ENCODE measurements at regions of chr14 and their contacts with region 1.

Region 1: GRCh38 chr14:61368114-61368726 is 46.8 kb downstream of the PRKCH start:
- DNase-seq: no peak
- H3K4me3 Mint-ChIP-seq: no peak overlapping the region
- H3K27ac Mint-ChIP-seq: peak overlapping the region; percentile 42
- H3K4me1 Mint-ChIP-seq: peaks cover 53% of the 10 kb centered on the region
- H3K27me3 Mint-ChIP-seq: no peaks in the 10 kb centered on the region

Region 2: GRCh38 chr14:61326847-61327246 is 41.4 kb before region 1 on chr14:
- CTCF ChIA-PET with region 1: interaction called, 3 read pairs
- POLR2A ChIA-PET with region 1: no interaction called
- intact Hi-C with region 1: loop called (anchors 1 kb)
- DNase-seq: no peak
- H3K4me3 Mint-ChIP-seq: peak overlapping the region; percentile 99
- H3K27ac Mint-ChIP-seq: peak overlapping the region; percentile 93
- H3K4me1 Mint-ChIP-seq: peaks cover 64% of the 10 kb centered on the region
- H3K27me3 Mint-ChIP-seq: no peaks in the 10 kb centered on the region

Region 3: DNA sequence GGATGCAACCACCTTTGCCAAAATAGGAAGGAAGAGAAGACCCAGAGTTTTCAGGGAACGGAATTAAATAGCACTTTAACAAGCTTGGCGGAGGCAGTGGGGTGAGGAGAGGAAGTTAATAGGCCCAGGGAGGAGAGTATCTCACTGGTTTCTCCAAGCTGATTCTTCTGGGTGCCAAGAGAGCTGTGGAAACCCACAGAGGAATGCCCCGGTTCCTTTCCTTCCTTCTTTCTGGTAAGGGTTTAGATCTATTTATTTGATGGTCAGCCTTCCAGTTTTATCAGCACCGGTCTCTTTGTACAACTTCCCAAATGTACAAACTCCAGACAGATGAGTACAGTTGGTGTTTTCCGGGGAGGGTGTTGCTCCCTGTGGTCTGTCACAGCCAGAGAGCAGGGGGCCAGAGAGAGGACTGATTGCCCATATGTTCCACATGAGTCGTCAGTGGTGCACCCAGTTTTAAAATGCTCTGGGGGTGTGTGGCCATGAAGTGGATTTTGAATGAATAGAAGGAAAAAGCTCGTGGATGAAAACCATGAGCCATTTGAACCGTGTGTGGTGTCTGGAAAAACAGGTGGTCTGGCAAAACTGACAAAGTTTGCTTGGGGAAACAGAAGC is 20.3 kb before region 1 on chr14:
- CTCF ChIA-PET with region 1: interaction called, 4 read pairs
- POLR2A ChIA-PET with region 1: interaction called, 4 read pairs
- intact Hi-C with region 1: loop called (anchors 1 kb)
- DNase-seq: peak; percentile 67
- H3K4me3 Mint-ChIP-seq: peak overlapping the region; percentile 82
- H3K27ac Mint-ChIP-seq: peak overlapping the region; percentile 98
- H3K4me1 Mint-ChIP-seq: peaks cover 98% of the 10 kb centered on the region
- H3K27me3 Mint-ChIP-seq: no peaks in the 10 kb centered on the region

Region 4: DNA sequence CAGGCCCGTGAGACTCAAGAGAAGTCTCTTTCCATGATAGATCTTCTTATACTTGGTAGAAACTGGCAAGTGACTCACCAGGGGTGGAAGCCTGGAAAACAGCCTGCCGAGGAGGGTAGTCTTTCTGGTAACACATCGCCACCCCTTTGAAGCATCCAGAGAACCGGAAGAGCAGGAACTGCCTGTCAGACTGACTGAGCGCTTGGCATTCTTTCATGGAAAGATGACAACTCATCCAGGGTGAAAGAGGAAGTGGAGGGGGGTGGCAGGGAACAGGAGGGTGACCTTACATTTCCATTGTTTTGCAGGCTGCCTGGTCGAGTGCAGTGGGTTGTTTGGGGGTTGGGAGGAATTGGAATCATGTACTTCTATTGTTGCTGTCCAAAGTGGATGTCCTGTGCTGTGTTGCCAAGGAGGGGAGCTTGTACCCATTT is 12.3 kb before region 1 on chr14:
- CTCF ChIA-PET with region 1: interaction called, 4 read pairs
- POLR2A ChIA-PET with region 1: interaction called, 4 read pairs
- intact Hi-C with region 1: loop called (anchors 1 kb)
- DNase-seq: peak; percentile 79
- H3K4me3 Mint-ChIP-seq: peak overlapping the region; percentile 63
- H3K27ac Mint-ChIP-seq: peak overlapping the region; percentile 87
- H3K4me1 Mint-ChIP-seq: peaks cover 89% of the 10 kb centered on the region
- H3K27me3 Mint-ChIP-seq: no peaks in the 10 kb centered on the region

Region 5: DNA sequence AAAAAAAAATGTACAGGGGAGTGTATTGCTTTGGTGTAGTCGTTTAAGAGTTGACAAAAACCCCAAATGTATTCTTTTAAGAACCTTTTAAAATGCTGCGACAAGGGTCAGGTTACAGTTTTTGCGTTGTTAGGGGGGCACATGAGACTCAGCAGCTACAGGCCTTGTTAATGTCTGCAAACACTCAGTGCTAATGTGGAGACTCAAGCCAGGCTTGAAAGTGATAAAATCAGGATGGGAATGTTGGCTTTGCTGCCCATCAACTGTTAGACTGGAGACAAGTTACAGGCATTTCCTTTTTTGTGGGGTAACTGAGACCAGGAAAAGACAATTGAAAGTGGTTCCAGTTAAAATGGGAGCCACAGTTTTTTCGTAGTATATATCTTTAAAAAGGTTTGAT is 38.0 kb after region 1 on chr14:
- CTCF ChIA-PET with region 1: no interaction called
- POLR2A ChIA-PET with region 1: no interaction called
- intact Hi-C with region 1: loop called (anchors 1 kb)
- DNase-seq: no peak
- H3K4me3 Mint-ChIP-seq: no peak overlapping the region
- H3K27ac Mint-ChIP-seq: peak overlapping the region; percentile 72
- H3K4me1 Mint-ChIP-seq: peaks cover 69% of the 10 kb centered on the region
- H3K27me3 Mint-ChIP-seq: no peaks in the 10 kb centered on the region

Region 6: GRCh38 chr14:61438860-61439684 is 70.9 kb after region 1 on chr14:
- CTCF ChIA-PET with region 1: no interaction called
- POLR2A ChIA-PET with region 1: no interaction called
- intact Hi-C with region 1: loop called (anchors 1 kb)
- DNase-seq: peak; percentile 67
- H3K4me3 Mint-ChIP-seq: peak overlapping the region; percentile 69
- H3K27ac Mint-ChIP-seq: peak overlapping the region; percentile 92
- H3K4me1 Mint-ChIP-seq: peaks cover 91% of the 10 kb centered on the region
- H3K27me3 Mint-ChIP-seq: no peaks in the 10 kb centered on the region

Measured in activated CD4-positive, alpha-beta memory T cell treated with anti-CD3 and anti-CD28 coated beads for 36 hours (primary cell).